Adrenal gland (tissue), 19 donors: ENCODE measurements at regions of chr19 and their contacts with region 1.

Region 1: DNA sequence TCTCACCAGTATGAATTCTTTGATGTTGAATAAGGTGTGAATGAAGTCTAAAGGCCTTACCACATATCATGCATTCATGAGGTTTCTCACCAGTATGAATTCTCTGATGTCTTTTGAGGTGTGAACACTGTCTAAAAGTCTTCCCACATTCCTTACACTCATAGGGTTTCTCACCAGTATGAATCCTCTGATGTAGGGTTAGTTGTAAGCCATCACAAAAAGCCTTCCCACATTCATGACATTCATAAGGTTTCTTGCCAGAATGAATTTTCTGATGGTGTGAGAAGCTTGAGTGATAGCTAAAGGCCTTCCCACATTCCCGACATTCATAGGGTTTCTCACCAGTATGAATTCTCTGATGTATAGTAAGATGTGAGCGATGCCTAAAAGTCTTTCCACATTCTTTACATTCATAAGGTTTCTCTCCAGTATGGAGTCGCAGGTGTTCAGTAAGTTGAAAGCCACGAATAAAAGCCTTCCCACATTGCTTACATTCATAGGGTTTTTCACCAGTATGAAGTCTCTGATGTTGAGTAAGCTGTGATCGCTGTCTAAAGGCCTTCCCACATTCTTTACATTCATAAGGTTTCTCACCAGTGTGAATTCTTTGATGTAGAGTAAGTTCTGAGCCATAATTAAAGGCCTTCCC is 27.7 kb downstream of the ZNF461 start:
- DNase-seq: no peak
- H3K4me3 ChIP-seq: peak overlapping the region in 1 of 4 donors; percentile 13
- H3K27ac ChIP-seq: no peak overlapping the region
- H3K4me1 ChIP-seq: no peaks in the 10 kb centered on the region
- H3K27me3 ChIP-seq: no peaks in the 10 kb centered on the region
- CTCF ChIP-seq: no peak
- POLR2A ChIP-seq: no peak

Region 2: GRCh38 chr19:36605101-36605876 is 33.7 kb before region 1 on chr19 and contains the start of gene ZNF382:
- intact Hi-C with region 1: no loop called
- DNase-seq: peak; percentile 83 to 89 (median 87)
- H3K4me3 ChIP-seq: peak within 1 kb of the TSS; percentile 49 to 77 (median 60)
- H3K27ac ChIP-seq: peak within 1 kb of the TSS; percentile 54 to 95 (median 87)
- H3K4me1 ChIP-seq: peaks cover 15 to 16% of the 10 kb centered on the region in 2 donors
- H3K27me3 ChIP-seq: no peaks in the 10 kb centered on the region
- CTCF ChIP-seq: no peak
- POLR2A ChIP-seq: peak; percentile 39 to 75
- total RNA-seq, gene ZNF382: 7.3 to 20.2 (median 12.0) TPM

Region 3: DNA sequence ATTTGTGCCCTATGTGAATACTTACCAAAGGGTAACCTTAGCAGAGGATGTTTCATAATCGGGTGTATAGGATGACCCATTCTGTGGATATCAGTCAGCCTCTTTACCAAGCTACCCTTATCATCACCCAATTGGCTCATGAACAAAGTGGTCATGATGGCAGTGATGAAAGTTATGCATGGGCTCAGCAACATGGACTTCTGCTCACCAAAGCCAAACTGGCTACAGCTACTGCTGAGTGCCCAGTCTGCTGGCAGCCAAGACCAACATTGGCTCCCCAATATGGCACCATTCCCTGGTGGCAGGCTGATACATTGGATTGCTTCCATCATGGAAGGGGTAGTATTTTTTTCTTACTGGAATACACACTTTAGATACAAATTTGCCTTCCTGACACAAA is 33.4 kb after region 1 on chr19:
- intact Hi-C with region 1: no loop called
- DNase-seq: no peak
- H3K4me3 ChIP-seq: no peak overlapping the region
- H3K27ac ChIP-seq: no peak overlapping the region
- H3K4me1 ChIP-seq: peaks cover 0 to 8% of the 10 kb centered on the region in 2 donors
- H3K27me3 ChIP-seq: no peaks in the 10 kb centered on the region
- CTCF ChIP-seq: no peak
- POLR2A ChIP-seq: no peak

Region 4: DNA sequence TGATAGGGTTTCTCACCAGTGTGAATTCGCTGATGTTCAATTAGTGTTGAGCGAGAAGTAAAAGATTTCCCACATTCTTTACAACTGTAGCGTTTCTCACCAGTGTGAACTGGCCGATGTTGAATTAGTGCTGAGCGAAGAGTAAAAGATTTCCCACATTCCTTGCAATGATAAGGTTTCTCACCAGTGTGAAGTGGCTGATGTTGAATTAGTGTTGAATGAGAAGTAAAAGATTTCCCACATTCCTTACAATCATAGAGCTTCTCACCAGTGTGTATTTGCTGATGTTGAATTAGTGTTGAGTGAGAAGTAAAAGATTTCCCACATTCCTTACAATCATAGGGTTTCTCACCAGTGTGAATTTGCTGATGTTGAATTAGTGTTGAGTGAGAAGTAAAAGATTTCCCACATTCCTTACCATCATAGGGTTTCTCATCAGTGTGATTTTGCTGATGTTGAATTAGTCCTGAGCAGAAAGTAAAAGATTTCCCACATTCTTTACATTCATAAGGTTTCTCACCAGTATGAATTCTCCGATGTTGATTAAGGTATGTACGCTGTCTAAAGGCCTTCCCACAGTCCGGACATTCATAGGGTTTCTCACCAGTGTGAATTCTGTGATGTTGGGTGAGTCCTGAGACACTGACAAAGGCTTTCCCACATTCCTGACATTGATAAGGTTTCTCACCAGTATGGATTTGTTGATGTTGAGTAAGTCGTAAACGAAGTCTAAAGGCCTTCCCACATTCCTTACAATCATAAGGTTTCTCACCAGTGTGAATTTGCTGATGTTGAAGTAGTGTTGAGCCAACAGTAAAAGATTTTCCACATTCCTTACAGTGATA is 109.7 kb after region 1 on chr19:
- intact Hi-C with region 1: no loop called
- DNase-seq: no peak
- H3K4me3 ChIP-seq: peak overlapping the region in 1 of 4 donors; percentile 38
- H3K27ac ChIP-seq: no peak overlapping the region
- H3K4me1 ChIP-seq: no peaks in the 10 kb centered on the region
- H3K27me3 ChIP-seq: no peaks in the 10 kb centered on the region
- CTCF ChIP-seq: no peak
- POLR2A ChIP-seq: no peak

Region 5: GRCh38 chr19:37136111-37136510 is 497.1 kb after region 1 on chr19:
- intact Hi-C with region 1: loop called in 1 of 2 experiments (anchors 10 kb)
- DNase-seq: no peak
- H3K4me3 ChIP-seq: no peak overlapping the region
- H3K27ac ChIP-seq: no peak overlapping the region
- H3K4me1 ChIP-seq: no peaks in the 10 kb centered on the region
- H3K27me3 ChIP-seq: no peaks in the 10 kb centered on the region
- CTCF ChIP-seq: no peak
- POLR2A ChIP-seq: no peak